PC-9 (cell line): ENCODE measurements at regions of chr1 and their contacts with region 1.

Region 1: GRCh38 chr1:117605774-117606648 is at the start of gene TENT5C:
- DNase-seq: peak; percentile 96 to 99
- H3K4me3 ChIP-seq: peak within 1 kb of the TSS; percentile 71
- H3K27ac ChIP-seq: peak within 1 kb of the TSS; percentile 39
- H3K4me1 ChIP-seq: peaks cover 14% of the 10 kb centered on the region
- H3K27me3 ChIP-seq: no peaks in the 10 kb centered on the region
- CTCF ChIP-seq: peak; percentile 24; the same call in 1 of the 2 replicates
- total RNA-seq, gene TENT5C: 3.9 and 4.3 TPM in 2 replicates

Region 2: GRCh38 chr1:117401761-117402160 is 204.2 kb before region 1 on chr1:
- CTCF ChIA-PET with region 1: no interaction called
- POLR2A ChIA-PET with region 1: interaction called, 12 read pairs
- intact Hi-C with region 1: no loop called
- DNase-seq: no peak
- H3K4me3 ChIP-seq: no peak overlapping the region
- H3K27ac ChIP-seq: no peak overlapping the region
- H3K4me1 ChIP-seq: no peaks in the 10 kb centered on the region
- H3K27me3 ChIP-seq: no peaks in the 10 kb centered on the region
- CTCF ChIP-seq: no peak

Region 3: DNA sequence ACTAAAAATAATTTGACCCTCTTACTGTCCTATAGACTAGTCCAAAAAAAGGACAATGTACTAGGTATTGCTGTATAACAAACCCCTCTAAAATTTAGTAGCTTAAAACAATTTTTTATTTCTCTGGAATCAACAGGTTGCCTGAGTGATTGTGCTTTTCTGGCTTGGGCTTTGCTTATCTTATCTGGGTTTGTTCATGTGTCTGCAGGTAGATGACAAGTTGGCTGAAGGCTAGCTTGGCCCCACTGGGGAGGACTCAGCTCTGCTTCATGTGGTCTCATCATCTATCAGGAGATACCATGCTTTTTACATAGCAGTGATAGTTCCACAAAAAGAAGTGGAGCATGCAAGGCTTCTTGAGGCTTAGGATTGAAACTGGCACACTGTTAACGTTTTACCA is 124.6 kb before region 1 on chr1:
- CTCF ChIA-PET with region 1: no interaction called
- POLR2A ChIA-PET with region 1: no interaction called
- intact Hi-C with region 1: no loop called
- DNase-seq: no peak
- H3K4me3 ChIP-seq: no peak overlapping the region
- H3K27ac ChIP-seq: no peak overlapping the region
- H3K4me1 ChIP-seq: no peaks in the 10 kb centered on the region
- H3K27me3 ChIP-seq: no peaks in the 10 kb centered on the region
- CTCF ChIP-seq: no peak

Region 4: DNA sequence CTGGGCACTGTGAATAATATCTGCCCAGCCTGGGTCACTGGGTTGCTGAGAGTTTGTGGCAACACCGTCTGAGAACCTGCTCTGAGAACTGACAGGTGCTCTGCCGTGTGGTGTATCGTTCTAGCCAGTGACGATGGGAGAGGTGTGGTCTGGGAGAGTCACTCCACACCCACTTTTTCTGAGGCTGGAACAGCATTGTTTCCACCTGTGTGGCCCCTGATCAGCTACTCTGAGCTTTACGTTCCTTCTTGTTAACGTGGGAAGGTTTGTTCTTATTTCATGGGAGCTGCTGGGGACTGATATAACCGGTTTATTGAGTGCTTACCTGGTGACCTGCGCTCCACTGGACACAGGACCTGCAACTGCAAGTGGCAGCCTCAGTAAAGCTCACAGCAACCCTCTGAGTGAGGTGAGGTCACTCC is 35.0 kb before region 1 on chr1:
- CTCF ChIA-PET with region 1: interaction called, 4 read pairs
- POLR2A ChIA-PET with region 1: no interaction called
- intact Hi-C with region 1: loop called (anchors 1 kb)
- DNase-seq: peak; percentile 77 to 100
- H3K4me3 ChIP-seq: peak overlapping the region; percentile 49; the same call in 1 of the 2 replicates
- H3K27ac ChIP-seq: peak overlapping the region; percentile 84
- H3K4me1 ChIP-seq: peaks cover 41% of the 10 kb centered on the region
- H3K27me3 ChIP-seq: no peaks in the 10 kb centered on the region
- CTCF ChIP-seq: no peak

Region 5: DNA sequence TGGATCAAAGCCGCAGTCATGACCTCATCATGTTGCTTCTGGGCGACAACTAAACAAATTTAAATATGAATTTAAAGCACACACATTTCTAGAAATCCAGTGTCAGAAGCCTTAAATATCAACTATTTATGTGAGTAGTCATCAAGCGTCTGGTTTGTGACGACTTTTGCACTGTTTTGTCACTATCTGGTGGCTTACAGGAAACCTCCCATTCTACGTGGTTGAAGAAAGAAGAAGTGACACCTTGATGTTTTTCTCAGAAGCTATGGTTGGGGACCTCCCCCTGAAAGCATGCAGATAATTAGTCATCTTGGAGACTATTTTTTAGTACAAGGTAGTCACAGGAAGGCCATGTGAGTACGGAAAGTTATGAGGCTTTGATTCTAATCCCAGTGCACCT is 58.3 kb after region 1 on chr1:
- CTCF ChIA-PET with region 1: no interaction called
- POLR2A ChIA-PET with region 1: no interaction called
- intact Hi-C with region 1: no loop called
- DNase-seq: no peak
- H3K4me3 ChIP-seq: no peak overlapping the region
- H3K27ac ChIP-seq: no peak overlapping the region
- H3K4me1 ChIP-seq: no peaks in the 10 kb centered on the region
- H3K27me3 ChIP-seq: no peaks in the 10 kb centered on the region
- CTCF ChIP-seq: no peak

Region 6: DNA sequence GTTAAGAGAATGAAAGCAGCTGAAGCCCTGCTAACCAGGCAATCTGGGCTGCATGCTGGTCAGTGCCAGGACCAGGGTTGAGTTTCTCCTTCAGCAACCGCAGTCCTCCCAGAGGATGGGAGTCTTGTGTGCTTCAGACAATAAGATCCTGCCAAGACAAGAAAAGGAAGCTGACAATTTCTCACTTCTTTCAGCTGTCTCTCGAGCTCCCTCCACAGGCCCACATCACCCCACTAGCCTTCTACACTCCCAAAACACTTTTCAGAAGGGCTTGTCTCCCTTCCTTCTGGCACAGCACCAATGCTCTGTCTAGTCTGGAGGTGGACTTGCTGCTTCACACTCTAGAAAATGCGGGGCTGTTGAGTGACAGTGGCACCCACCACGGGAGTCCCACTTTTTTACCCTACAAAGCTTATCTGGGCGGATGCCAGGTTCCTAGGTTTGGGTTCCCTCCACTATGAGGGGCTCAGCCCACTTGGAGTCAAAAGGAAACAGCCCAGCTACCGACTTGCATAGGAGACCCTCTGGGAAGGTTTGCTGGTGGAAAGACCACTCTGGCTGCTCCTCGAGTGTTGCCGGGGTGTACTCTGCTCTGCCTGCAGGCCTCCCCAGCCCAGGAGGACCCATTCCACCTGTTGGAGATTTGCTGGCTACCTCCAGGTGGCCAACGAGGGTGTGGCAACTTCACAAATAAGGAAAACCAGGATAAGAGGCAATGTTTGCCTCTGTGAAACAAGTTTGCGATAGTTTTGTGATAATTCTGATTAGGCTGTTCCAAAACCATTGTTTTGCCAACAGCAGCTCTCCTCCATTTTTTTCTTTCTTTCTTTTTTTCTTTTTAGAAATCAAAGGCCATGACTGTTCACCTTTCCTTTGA is 68.7 kb after region 1 on chr1:
- CTCF ChIA-PET with region 1: no interaction called
- POLR2A ChIA-PET with region 1: no interaction called
- intact Hi-C with region 1: loop called (anchors 2 kb)
- DNase-seq: peak in 1 of 2 experiments; percentile 55
- H3K4me3 ChIP-seq: no peak overlapping the region
- H3K27ac ChIP-seq: no peak overlapping the region
- H3K4me1 ChIP-seq: peaks cover 7% of the 10 kb centered on the region
- H3K27me3 ChIP-seq: no peaks in the 10 kb centered on the region
- CTCF ChIP-seq: peak; percentile 51; the same call in 1 of the 2 replicates

Region 7: DNA sequence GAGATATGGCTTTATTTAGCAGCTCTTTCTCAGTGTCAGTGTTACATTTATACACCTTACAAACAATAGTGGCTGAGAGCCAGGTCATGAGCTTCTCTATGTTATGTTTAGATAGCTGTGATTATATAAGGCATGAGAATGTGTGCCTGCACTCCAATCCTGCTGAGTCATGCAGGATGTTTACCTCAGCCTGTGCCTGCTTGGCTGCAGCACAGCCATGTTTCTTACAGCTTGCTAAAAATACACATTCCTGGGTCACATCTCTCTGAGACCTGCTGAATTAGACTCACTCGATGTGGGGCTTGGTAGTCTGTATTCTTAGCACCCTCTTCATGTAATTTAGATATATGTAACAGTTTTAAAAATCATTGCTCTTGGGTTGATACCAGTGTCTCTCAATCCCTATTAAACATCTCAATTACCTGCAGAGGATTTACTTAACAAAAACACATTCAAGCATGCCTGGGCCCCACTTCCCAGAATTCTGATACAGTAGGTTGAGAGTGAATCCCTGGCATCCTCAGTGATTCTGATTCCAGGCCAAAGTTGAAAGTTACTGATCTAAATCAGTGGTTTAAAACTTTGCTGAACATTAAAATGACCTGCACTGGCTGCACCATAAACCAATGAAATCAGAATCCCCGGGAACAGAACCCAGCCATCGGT is 215.9 kb after region 1 on chr1:
- CTCF ChIA-PET with region 1: no interaction called
- POLR2A ChIA-PET with region 1: no interaction called
- intact Hi-C with region 1: loop called (anchors 10 kb)
- DNase-seq: peak; percentile 62 to 93
- H3K4me3 ChIP-seq: no peak overlapping the region
- H3K27ac ChIP-seq: peak overlapping the region; percentile 50
- H3K4me1 ChIP-seq: peaks cover 46% of the 10 kb centered on the region
- H3K27me3 ChIP-seq: no peaks in the 10 kb centered on the region
- CTCF ChIP-seq: no peak